ENCODE measurements at regions of chr4 and their contacts with region 1.

Region 1: GRCh38 chr4:112145326-112145819 is at the start of gene FAM241A:
- DNase-seq: peak; percentile 73 to 90 (median 82)
- H3K4me3 ChIP-seq: peak within 1 kb of the TSS; percentile 55 to 88 (median 77)
- H3K27ac ChIP-seq: peak within 1 kb of the TSS in 55 of 59 donors; percentile 14 to 92 (median 80)
- H3K27me3 ChIP-seq: no peaks in the 10 kb centered on the region
- CTCF ChIP-seq: peak in 5 of 56 donors; percentile 6 to 33 (median 18)
- total RNA-seq, gene FAM241A: 0.97 to 2.7 (median 1.8) TPM

Region 2: GRCh38 chr4:111991797-111992196 is 153.6 kb before region 1 on chr4:
- intact Hi-C with region 1: no loop called
- DNase-seq: no peak
- H3K4me3 ChIP-seq: no peak overlapping the region
- H3K27ac ChIP-seq: no peak overlapping the region
- H3K27me3 ChIP-seq: peaks cover 0 to 45% (median 5%) of the 10 kb centered on the region in 45 donors
- CTCF ChIP-seq: no peak

Region 3: GRCh38 chr4:112189754-112190153 is 44.4 kb after region 1 on chr4:
- intact Hi-C with region 1: loop called in 1 of 2 experiments (anchors 5 kb)
- DNase-seq: no peak
- H3K4me3 ChIP-seq: no peak overlapping the region
- H3K27ac ChIP-seq: peak overlapping the region in 3 of 59 donors; percentile 9 to 51 (median 27)
- H3K27me3 ChIP-seq: no peaks in the 10 kb centered on the region
- CTCF ChIP-seq: peak in 45 of 56 donors; percentile 10 to 72 (median 39)

Region 4: DNA sequence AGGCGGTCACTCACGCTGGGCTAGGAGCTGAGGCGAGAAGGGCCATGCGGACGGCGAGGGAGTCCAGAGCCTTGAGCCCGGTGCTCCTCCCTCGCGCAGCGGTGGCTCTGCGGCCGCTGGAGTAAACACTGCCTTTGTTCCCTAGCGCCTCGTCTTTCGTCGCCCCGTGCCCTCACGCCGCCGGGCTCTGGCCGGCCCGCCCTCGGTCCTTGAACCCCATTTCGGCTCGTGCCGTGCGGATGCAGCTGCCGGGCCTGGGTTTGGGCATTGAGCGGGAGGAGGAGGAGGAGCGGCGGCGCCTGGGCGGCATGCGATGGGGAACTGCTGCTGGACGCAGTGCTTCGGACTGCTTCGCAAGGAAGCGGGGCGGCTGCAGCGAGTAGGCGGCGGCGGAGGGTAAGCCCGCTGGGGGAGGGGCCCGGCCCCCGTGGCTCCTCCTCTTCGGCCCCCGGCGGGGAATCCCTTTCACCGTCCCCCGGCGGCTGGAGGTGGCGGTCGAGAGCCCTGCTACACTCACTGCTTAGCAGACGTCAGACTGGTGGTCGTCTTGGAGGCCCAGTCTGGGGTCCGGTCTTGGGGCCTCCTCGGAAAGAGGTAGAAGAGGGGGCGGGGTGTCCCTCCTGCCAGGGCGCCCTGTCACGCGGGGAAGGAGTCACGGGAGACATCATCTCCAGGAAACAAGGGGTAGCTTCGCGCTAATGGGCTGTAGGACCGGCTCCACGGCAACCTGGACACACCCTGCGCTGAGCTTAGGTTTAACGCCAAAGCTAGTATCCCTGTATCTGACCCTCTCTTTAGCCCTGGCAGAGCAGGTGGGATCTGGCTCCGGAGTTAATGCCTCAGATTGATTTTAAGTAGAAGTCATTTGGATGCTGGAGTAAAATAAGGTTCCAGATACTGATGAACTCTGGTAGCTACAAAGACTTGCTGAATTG is 86.7 kb after region 1 on chr4 and contains the start of gene AP1AR:
- intact Hi-C with region 1: loop called (anchors 1 to 5 kb)
- DNase-seq: peak; percentile 59 to 88 (median 76)
- H3K4me3 ChIP-seq: peak within 1 kb of the TSS; percentile 65 to 99 (median 94)
- H3K27ac ChIP-seq: peak within 1 kb of the TSS; percentile 83 to 99 (median 95)
- H3K27me3 ChIP-seq: no peaks in the 10 kb centered on the region
- CTCF ChIP-seq: peak in 26 of 56 donors; percentile 0 to 47 (median 19)
- total RNA-seq, gene AP1AR: 10.1 to 30.2 (median 21.8) TPM